ENCODE measurements at regions of chr2 and their contacts with region 1.

Region 1: DNA sequence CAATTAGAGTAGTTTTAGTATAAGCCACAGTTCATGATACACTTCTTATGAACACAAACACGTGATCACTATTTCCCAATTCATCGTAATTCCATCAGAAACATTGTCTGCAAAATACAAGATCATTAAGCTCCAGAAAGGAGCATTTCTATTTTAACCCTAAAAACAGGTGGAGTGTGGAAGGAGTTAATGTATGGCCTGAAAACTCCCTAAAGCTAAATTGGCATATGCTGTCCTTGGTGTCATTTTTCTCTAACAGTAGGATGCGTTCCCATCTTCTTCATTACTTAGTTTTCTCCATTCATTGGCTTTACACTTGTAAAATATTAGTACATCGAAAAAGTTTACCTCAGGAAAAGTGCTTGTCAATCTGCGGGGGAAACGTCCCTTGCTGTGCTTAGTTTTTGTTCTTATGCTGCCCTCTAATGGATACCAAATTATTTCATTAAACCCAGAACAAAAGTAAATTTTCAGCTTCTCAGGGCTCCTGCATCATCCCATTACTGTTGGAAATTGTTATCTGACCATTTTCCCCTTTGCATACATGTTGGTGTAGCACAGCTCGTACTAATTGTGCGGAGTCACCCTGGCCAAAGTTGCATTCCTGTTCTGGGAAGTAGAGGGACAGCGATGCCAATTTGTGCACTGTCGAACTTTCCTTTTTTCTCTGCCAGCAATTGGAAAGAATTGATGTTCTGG is 153.4 kb downstream of the GPD2 start:
- DNase-seq: peak; percentile 63
- ATAC-seq: peak; percentile 43
- H3K4me3 ChIP-seq: no peak overlapping the region
- H3K4me3 Mint-ChIP-seq: no peak overlapping the region
- H3K27ac ChIP-seq: no peak overlapping the region
- H3K27ac Mint-ChIP-seq: no peak overlapping the region
- H3K4me1 ChIP-seq: no peaks in the 10 kb centered on the region
- H3K4me1 Mint-ChIP-seq: peaks cover 4% of the 10 kb centered on the region
- H3K27me3 ChIP-seq: no peaks in the 10 kb centered on the region
- H3K27me3 Mint-ChIP-seq: no peaks in the 10 kb centered on the region
- CTCF ChIP-seq: peak; percentile 83

Region 2: GRCh38 chr2:155368934-155369333 is 1220.6 kb before region 1 on chr2:
- CTCF ChIA-PET with region 1: interaction called, 3 read pairs
- POLR2A ChIA-PET with region 1: no interaction called
- intact Hi-C with region 1: loop called (anchors 2 kb)
- DNase-seq: peak; percentile 8
- ATAC-seq: no peak
- H3K4me3 ChIP-seq: no peak overlapping the region
- H3K4me3 Mint-ChIP-seq: no peak overlapping the region
- H3K27ac ChIP-seq: no peak overlapping the region
- H3K27ac Mint-ChIP-seq: no peak overlapping the region
- H3K4me1 ChIP-seq: no peaks in the 10 kb centered on the region
- H3K4me1 Mint-ChIP-seq: no peaks in the 10 kb centered on the region
- H3K27me3 ChIP-seq: no peaks in the 10 kb centered on the region
- H3K27me3 Mint-ChIP-seq: peaks cover 2% of the 10 kb centered on the region
- CTCF ChIP-seq: peak; percentile 49

Region 3: GRCh38 chr2:155377266-155377680 is 1212.3 kb before region 1 on chr2:
- CTCF ChIA-PET with region 1: interaction called, 25 read pairs
- POLR2A ChIA-PET with region 1: no interaction called
- intact Hi-C with region 1: no loop called
- DNase-seq: peak; percentile 17
- ATAC-seq: no peak
- H3K4me3 ChIP-seq: no peak overlapping the region
- H3K4me3 Mint-ChIP-seq: no peak overlapping the region
- H3K27ac ChIP-seq: no peak overlapping the region
- H3K27ac Mint-ChIP-seq: no peak overlapping the region
- H3K4me1 ChIP-seq: no peaks in the 10 kb centered on the region
- H3K4me1 Mint-ChIP-seq: no peaks in the 10 kb centered on the region
- H3K27me3 ChIP-seq: no peaks in the 10 kb centered on the region
- H3K27me3 Mint-ChIP-seq: peaks cover 2% of the 10 kb centered on the region
- CTCF ChIP-seq: peak; percentile 28

Region 4: DNA sequence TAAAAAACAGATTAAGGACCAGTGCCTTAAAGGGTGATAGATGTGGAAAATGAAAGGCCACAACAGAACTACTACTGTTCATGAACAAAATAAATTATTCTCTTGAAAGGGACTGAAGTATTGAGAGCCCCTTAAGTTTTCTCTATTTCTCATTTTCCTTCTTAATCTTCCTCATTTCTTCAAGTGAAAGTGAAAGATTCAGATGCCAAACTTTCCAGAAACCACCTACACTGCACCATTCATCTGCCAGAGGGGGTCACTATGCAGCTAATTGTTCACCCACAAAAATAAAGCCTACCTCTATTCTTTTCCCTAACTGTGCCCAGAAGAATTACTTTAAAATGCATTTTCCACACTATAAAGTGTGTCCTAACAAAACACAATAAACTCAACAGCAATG is 397.1 kb before region 1 on chr2:
- CTCF ChIA-PET with region 1: interaction called, 22 read pairs
- POLR2A ChIA-PET with region 1: no interaction called
- intact Hi-C with region 1: loop called (anchors 1 kb)
- DNase-seq: peak; percentile 3
- ATAC-seq: no peak
- H3K4me3 ChIP-seq: no peak overlapping the region
- H3K4me3 Mint-ChIP-seq: no peak overlapping the region
- H3K27ac ChIP-seq: no peak overlapping the region
- H3K27ac Mint-ChIP-seq: no peak overlapping the region
- H3K4me1 ChIP-seq: no peaks in the 10 kb centered on the region
- H3K4me1 Mint-ChIP-seq: no peaks in the 10 kb centered on the region
- H3K27me3 ChIP-seq: no peaks in the 10 kb centered on the region
- H3K27me3 Mint-ChIP-seq: no peaks in the 10 kb centered on the region
- CTCF ChIP-seq: no peak

Region 5: GRCh38 chr2:156332534-156333273 is 256.8 kb before region 1 on chr2 and contains the start of gene NR4A2:
- CTCF ChIA-PET with region 1: interaction called, 64 read pairs
- POLR2A ChIA-PET with region 1: interaction called, 18 read pairs
- intact Hi-C with region 1: loop called (anchors 1 kb)
- DNase-seq: peak; percentile 97
- ATAC-seq: peak; percentile 56
- H3K4me3 ChIP-seq: peak within 1 kb of the TSS; percentile 90 to 99 (median 93)
- H3K4me3 Mint-ChIP-seq: peak within 1 kb of the TSS; percentile 95
- H3K27ac ChIP-seq: peak within 1 kb of the TSS; percentile 98 to 99
- H3K27ac Mint-ChIP-seq: peak within 1 kb of the TSS; percentile 99
- H3K4me1 ChIP-seq: peaks cover 43 to 52% of the 10 kb centered on the region in 2 donors
- H3K4me1 Mint-ChIP-seq: peaks cover 53% of the 10 kb centered on the region
- H3K27me3 ChIP-seq: peaks cover 2 to 45% (median 36%) of the 10 kb centered on the region in 4 experiments
- H3K27me3 Mint-ChIP-seq: peaks cover 30% of the 10 kb centered on the region
- CTCF ChIP-seq: no peak
- total RNA-seq, gene NR4A2: 30.6 and 33.8 TPM in 2 replicates

Region 6: DNA sequence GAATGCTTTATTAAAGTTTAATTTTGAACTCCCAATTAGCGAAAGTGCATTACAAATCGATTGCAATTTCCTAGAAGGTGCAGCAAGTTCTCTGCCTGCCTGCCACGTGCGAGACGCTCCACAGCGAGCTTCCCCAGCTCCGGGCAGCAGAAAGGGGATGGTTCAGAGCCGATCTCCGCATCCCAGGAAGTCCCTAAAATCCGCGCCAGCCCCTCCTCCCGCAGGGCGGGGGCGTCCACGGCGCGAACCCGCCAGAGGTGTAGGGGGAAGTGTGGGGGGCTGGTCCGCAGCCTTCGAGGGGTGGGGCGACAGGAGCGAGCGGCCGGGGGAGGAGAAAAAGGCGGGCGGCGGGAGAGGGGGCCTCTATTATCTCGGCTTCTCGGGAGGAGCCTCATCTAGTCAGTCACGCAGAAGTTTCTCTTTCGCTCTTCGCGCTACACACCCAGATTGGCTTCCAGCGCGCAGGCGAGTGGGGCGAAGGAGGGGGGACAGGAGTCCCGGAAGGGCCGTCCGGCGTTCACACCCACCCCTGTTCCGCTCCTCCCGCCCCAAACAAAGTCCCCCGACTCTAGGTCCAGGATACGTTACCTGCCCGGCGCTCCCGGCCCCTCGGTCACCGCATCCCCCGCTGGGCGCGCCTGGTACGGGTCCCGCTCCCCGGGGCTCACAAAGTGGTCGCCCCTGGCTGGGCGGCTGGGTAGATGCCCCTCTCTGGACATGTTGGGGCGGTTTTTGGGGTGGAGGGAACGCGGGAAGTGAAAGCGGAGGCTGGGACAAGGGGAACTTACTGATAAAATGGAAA is 247.9 kb before region 1 on chr2:
- CTCF ChIA-PET with region 1: interaction called, 11 read pairs
- POLR2A ChIA-PET with region 1: no interaction called
- intact Hi-C with region 1: no loop called
- DNase-seq: peak; percentile 94
- ATAC-seq: peak; percentile 73
- H3K4me3 ChIP-seq: peak overlapping the region; percentile 81 to 96 (median 84)
- H3K4me3 Mint-ChIP-seq: peak overlapping the region; percentile 93
- H3K27ac ChIP-seq: peak overlapping the region; percentile 99 to 100
- H3K27ac Mint-ChIP-seq: peak overlapping the region; percentile 99
- H3K4me1 ChIP-seq: peaks cover 13 to 14% of the 10 kb centered on the region in 2 donors
- H3K4me1 Mint-ChIP-seq: peaks cover 25% of the 10 kb centered on the region
- H3K27me3 ChIP-seq: no peaks in the 10 kb centered on the region
- H3K27me3 Mint-ChIP-seq: no peaks in the 10 kb centered on the region
- CTCF ChIP-seq: no peak

Region 7: DNA sequence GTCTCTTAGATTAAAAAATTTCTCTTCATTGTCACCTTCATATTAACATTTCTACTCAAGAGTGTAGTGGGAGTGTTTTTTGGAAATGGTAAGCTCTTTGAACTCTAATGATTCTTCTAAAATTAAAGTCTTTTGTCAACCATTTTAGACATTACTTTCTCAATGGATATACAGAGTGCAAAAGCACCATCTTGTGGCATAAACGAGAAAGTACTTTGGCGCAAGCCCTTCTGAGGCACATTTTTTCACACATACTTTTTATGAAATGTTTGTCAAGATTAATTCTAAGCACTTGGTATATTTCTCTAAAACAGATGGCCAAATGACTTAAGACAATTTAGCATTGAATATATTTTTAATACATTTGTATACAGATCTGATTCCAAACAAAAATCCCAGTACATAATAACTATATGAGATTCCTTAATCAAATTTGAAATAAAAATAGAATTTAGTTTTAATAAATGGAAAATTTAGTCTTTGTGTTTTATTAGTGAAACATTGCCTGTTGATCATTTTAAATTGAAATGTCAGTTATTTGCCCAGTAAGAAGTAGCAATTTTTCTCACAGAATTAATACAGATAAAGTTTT is 604.7 kb after region 1 on chr2:
- CTCF ChIA-PET with region 1: no interaction called
- POLR2A ChIA-PET with region 1: no interaction called
- intact Hi-C with region 1: loop called (anchors 10 kb)
- DNase-seq: peak; percentile 33
- ATAC-seq: no peak
- H3K4me3 ChIP-seq: no peak overlapping the region
- H3K4me3 Mint-ChIP-seq: no peak overlapping the region
- H3K27ac ChIP-seq: no peak overlapping the region
- H3K27ac Mint-ChIP-seq: no peak overlapping the region
- H3K4me1 ChIP-seq: no peaks in the 10 kb centered on the region
- H3K4me1 Mint-ChIP-seq: no peaks in the 10 kb centered on the region
- H3K27me3 ChIP-seq: no peaks in the 10 kb centered on the region
- H3K27me3 Mint-ChIP-seq: peaks cover 3% of the 10 kb centered on the region
- CTCF ChIP-seq: peak; percentile 64